ENCODE measurements at regions of chr11 and their contacts with region 1.

Region 1: GRCh38 chr11:117843666-117844484 is 19.3 kb upstream of the FXYD2 start:
- DNase-seq: peak; percentile 87
- ATAC-seq: peak; percentile 86
- H3K4me3 Mint-ChIP-seq: no peak overlapping the region
- H3K27ac Mint-ChIP-seq: no peak overlapping the region
- H3K4me1 Mint-ChIP-seq: peaks cover 7% of the 10 kb centered on the region
- H3K27me3 Mint-ChIP-seq: peaks cover 14% of the 10 kb centered on the region

Region 2: DNA sequence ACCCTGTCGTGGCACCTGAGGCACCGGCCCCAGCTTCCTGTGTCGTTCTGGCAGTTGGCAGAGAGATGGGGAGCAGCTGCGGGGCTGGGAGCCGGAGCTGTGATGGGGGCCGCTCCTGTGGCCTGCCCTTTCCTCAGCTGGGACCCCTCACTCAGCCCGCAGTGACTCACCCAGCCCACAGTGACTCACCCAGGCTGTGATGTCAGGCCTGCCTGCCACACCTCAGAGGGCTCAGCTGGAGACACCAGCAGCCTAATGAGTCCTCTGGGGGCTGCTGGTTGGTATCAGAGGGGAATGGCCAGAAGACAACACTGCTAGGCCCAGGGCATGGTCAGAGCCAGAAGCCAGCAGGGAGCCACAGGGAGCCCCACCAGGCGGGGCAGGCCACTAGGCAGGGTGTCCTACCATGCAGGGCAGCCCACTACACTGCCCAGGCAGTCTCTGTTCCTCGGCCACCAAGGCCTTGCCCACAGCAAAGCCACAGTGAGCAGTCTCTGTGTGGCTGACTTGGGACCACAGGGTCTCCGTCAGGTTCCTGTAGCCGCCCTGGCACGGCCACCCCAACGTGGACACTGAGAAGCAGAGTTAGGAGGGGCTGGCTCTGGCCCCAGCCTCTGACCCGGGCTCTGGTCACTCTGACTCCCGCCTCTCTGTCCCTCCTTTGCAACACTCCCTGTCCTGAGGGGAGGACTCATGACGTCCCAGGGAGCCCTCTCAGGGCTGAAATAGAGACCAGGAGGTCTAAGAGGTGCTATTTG is 15.1 kb before region 1 on chr11:
- CTCF ChIA-PET with region 1: interaction called, 24 read pairs
- DNase-seq: peak; percentile 96
- ATAC-seq: peak; percentile 94
- H3K4me3 Mint-ChIP-seq: no peak overlapping the region
- H3K27ac Mint-ChIP-seq: peak overlapping the region; percentile 85
- H3K4me1 Mint-ChIP-seq: peaks cover 72% of the 10 kb centered on the region
- H3K27me3 Mint-ChIP-seq: no peaks in the 10 kb centered on the region

Region 3: GRCh38 chr11:117907251-117907981 is 63.5 kb after region 1 on chr11:
- CTCF ChIA-PET with region 1: interaction called, 16 read pairs
- DNase-seq: peak; percentile 84
- ATAC-seq: peak; percentile 97
- H3K4me3 Mint-ChIP-seq: peak overlapping the region; percentile 29
- H3K27ac Mint-ChIP-seq: peak overlapping the region; percentile 65
- H3K4me1 Mint-ChIP-seq: peaks cover 19% of the 10 kb centered on the region
- H3K27me3 Mint-ChIP-seq: no peaks in the 10 kb centered on the region

Region 4: DNA sequence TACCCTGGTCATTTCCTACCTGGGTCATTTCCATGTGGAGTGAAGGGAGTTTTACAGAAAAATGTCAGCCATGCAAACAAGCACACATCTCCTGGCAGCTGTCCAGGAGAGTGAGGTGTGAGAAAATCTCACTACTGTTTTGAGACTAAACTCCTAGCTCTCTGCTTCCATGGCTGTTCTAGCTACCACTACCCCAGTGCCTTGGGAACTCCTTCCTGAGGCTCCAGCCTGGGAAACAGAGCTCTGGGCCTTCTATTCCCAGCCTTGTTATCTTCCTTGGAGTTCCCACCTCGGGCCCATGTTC is 88.1 kb after region 1 on chr11:
- CTCF ChIA-PET with region 1: interaction called, 11 read pairs
- DNase-seq: peak; percentile 71
- ATAC-seq: no peak
- H3K4me3 Mint-ChIP-seq: no peak overlapping the region
- H3K27ac Mint-ChIP-seq: peak overlapping the region; percentile 95
- H3K4me1 Mint-ChIP-seq: peaks cover 81% of the 10 kb centered on the region
- H3K27me3 Mint-ChIP-seq: peaks cover 7% of the 10 kb centered on the region

Region 5: DNA sequence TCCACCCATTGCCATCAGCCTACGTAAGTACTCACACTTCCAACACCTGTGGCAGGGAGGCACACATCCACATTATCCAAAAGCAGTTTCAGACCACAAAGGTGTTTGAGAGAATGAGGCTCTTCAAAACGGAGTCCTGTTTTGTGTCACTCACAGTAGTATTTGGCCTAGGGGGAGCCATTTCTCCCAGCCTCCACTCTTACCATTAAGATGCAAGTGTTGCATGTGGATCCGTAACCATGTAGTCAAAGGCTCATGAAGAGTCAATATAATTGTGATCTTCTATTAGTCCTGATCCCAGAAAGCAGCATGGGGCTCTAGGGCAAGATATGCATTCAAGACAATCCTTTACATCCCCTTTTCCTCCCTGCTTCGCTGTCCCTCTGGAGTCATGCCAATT is 183.8 kb after region 1 on chr11:
- CTCF ChIA-PET with region 1: no interaction called
- DNase-seq: no peak
- ATAC-seq: no peak
- H3K4me3 Mint-ChIP-seq: no peak overlapping the region
- H3K27ac Mint-ChIP-seq: no peak overlapping the region
- H3K4me1 Mint-ChIP-seq: peaks cover 34% of the 10 kb centered on the region
- H3K27me3 Mint-ChIP-seq: no peaks in the 10 kb centered on the region

Measured in activated CD8-positive, alpha-beta memory T cell treated with anti-CD3 and anti-CD28 coated beads, Interleukin-2, amount 10 ng/mL, durations not matched to agents 7 days and 5 days (primary cell).